GM10248 (cell line): ENCODE measurements at regions of chr9 and their contacts with region 1.

Region 1: DNA sequence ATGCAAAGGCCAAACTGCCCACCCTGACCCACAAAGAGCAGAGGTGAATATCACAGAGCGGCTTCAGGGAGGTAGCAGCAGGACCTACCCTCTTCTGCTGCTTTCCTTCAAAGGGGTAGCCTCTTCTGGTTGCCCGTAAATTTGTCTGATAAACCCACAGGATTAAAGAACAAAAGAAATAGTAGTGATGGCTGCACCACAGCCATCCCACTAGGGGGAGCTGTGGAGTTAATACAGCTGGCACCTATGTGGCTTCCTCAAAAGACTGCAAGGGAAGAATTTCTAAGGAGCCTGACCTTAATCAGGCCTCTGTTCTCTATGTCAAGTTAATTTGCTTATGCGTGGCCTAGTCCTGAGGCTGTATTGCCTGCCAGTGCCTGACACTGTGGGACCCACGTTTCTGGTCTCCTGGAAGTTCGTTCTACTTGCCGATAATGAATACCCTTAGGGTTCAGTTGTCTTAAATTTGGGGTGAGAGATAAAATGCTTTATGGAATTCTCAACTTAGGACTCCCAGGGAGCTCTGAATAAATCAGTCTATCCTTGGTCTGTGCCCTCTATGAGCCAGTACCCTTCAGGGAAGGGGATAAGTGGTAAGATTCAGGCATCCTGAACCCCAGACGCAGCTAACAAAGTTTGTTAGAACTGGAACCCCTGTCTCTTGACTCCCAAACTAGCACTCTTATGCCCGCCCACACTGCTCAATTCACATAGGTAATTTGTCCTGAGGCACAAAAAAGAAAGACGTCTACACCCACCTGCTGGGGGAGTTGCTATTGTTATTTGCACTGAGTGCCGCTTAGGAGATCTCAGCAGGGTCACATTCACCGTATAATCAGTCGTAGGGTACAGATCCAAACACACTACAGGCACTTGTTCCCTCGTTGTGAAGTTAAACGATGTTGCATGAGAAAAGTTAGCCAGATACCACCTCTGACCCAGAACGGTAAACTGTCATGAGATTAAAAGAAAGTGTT is 77.1 kb downstream of the SUSD1 start:
- DNase-seq: peak; percentile 69
- CTCF ChIP-seq: peak; percentile 88

Region 2: GRCh38 chr9:111759762-111760639 is 338.0 kb before region 1 on chr9:
- CTCF ChIA-PET with region 1: interaction called, 15 read pairs
- POLR2A ChIA-PET with region 1: no interaction called
- DNase-seq: peak; percentile 66
- CTCF ChIP-seq: peak; percentile 57

Region 3: DNA sequence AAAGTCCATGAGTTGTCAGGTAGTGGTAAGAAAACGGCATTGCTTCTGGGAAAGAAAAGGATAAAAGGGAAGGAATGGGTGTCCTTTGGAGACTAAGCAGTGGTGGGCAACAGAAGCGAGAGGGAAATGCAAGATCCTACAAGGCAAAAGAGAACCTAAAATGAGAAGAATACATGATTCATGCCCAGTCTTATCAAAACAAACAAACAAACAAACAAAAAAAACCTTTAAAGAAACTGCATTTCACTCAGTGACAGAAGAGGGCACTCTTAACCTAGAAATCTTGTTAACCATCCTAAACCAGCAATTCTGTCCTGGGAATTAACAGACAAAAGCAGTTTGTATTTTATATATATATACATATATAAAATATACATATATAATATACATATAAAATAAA is 11.4 kb before region 1 on chr9:
- CTCF ChIA-PET with region 1: interaction called, 34 read pairs
- POLR2A ChIA-PET with region 1: no interaction called
- DNase-seq: no peak
- CTCF ChIP-seq: peak; percentile 50

Region 4: GRCh38 chr9:112119225-112120029 is 21.4 kb after region 1 on chr9:
- CTCF ChIA-PET with region 1: interaction called, 30 read pairs
- POLR2A ChIA-PET with region 1: no interaction called
- DNase-seq: no peak
- CTCF ChIP-seq: no peak

Region 5: DNA sequence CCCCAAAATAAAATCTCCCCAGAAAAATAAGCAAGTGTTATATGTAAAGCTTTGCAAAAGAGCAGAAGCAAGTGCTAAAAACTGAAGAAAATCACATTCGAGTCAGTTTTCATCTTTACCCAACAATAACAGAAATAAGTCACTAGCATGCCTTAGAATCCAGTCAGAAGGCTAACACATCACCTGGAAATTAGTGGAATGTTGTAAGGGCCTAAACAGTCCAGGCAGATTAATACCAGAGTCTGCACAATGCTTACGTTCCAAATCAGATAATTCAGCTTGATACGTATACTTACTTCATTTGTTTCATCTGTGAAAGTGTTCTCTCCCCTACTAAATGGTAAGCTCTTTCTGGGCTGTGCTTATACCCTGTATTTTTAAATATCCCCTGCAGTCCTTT is 34.4 kb after region 1 on chr9:
- CTCF ChIA-PET with region 1: interaction called, 15 read pairs
- POLR2A ChIA-PET with region 1: no interaction called
- DNase-seq: no peak
- CTCF ChIP-seq: no peak

Region 6: DNA sequence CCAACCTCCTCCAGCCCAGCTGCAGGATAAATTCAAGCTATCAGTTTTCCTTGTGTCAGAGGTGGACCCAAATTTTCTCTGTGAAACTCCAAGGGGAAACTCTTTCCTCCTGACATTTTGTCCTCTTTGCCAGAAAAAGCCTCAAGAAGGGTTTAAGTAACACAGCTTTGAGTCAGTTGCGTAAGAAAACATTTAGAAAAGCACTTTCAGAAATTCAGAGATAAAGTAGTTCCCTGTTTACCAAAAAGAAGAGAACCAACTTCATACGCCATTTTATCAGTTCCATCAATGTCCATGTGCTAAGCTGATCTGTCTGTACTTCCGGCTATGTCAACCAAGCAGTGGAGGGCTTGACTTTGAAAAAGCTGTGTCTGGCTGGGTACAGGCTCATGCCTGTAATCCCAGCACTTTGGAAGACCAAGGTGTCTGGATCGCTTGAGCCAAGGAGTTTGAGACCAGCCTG is 97.0 kb after region 1 on chr9:
- CTCF ChIA-PET with region 1: no interaction called
- POLR2A ChIA-PET with region 1: no interaction called
- DNase-seq: no peak
- CTCF ChIP-seq: no peak

Region 7: GRCh38 chr9:112379177-112380101 is 281.4 kb after region 1 on chr9:
- CTCF ChIA-PET with region 1: interaction called, 10 read pairs
- POLR2A ChIA-PET with region 1: no interaction called
- DNase-seq: peak; percentile 97
- CTCF ChIP-seq: no peak